Endothelial cell of umbilical vein (primary cell): ENCODE measurements at regions of chr5 and their contacts with region 1.

Region 1: DNA sequence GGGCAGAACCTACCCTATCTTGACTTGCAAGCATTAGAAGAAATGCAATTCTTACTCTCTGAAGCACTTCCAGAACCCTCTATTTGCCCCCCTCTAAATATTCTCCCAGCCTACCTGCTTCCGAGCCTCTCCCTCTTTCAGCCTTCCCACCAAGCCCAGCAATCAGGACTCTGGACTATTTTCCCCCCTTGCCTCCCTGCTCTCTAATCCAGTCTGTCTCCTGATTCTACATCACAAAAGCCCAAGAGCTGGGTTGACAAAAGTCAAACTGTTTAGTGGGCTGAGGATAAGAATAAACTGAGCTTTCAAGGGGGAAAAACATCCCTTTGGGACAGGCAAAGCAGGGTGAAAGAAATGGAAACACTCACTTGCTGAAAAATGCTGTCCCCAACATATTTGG is 123.2 kb upstream of the KIF2A start:
- DNase-seq: no peak
- H3K4me3 ChIP-seq: no peak overlapping the region
- H3K27ac ChIP-seq: no peak overlapping the region
- H3K4me1 ChIP-seq: no peaks in the 10 kb centered on the region
- H3K27me3 ChIP-seq: peaks cover 2 to 6% of the 10 kb centered on the region in 2 experiments
- CTCF ChIP-seq: no peak
- POLR2A ChIP-seq: no peak

Region 2: GRCh38 chr5:61599370-61600122 is 583.3 kb before region 1 on chr5:
- CTCF ChIA-PET with region 1: no interaction called
- POLR2A ChIA-PET with region 1: no interaction called
- dilution Hi-C with region 1: no loop called
- intact Hi-C with region 1: loop called (anchors 10 kb)
- DNase-seq: peak; percentile 10
- H3K4me3 ChIP-seq: no peak overlapping the region
- H3K27ac ChIP-seq: no peak overlapping the region
- H3K4me1 ChIP-seq: no peaks in the 10 kb centered on the region
- H3K27me3 ChIP-seq: peaks cover 21 to 27% of the 10 kb centered on the region in 2 experiments
- CTCF ChIP-seq: no peak
- POLR2A ChIP-seq: no peak